Common myeloid progenitor, CD34-positive (primary cell): ENCODE measurements at regions of chr18 and their contacts with region 1.

Region 1: GRCh38 chr18:25284861-25285550 is 67.0 kb downstream of the ZNF521 start:
- DNase-seq: peak; percentile 49 to 91 (median 85)
- H3K4me3 ChIP-seq: peak overlapping the region in 2 of 7 experiments; percentile 25 to 43
- H3K27ac ChIP-seq: peak overlapping the region; percentile 62 to 79
- H3K4me1 ChIP-seq: peaks cover 22 to 64% (median 43%) of the 10 kb centered on the region in 4 experiments
- H3K27me3 ChIP-seq: no peaks in the 10 kb centered on the region

Region 2: GRCh38 chr18:25298853-25299274 is 13.9 kb after region 1 on chr18:
- CTCF ChIA-PET with region 1: interaction called, 25 read pairs
- POLR2A ChIA-PET with region 1: interaction called, 5 read pairs
- DNase-seq: peak; percentile 93 to 98 (median 96)
- H3K4me3 ChIP-seq: peak overlapping the region in 3 of 7 experiments; percentile 11 to 52 (median 33)
- H3K27ac ChIP-seq: peak overlapping the region; percentile 95
- H3K4me1 ChIP-seq: peaks cover 4 to 39% (median 24%) of the 10 kb centered on the region in 4 experiments
- H3K27me3 ChIP-seq: no peaks in the 10 kb centered on the region